A549 (cell line): ENCODE measurements at regions of chr12 and their contacts with region 1.

Region 1: GRCh38 chr12:122336015-122336946 is 70.0 kb upstream of the VPS33A start:
- DNase-seq: peak; percentile 38 to 51
- ATAC-seq: peak in 1 of 2 experiments; percentile 80; a peak in 3 of 6 replicates
- H3K4me3 ChIP-seq: no peak overlapping the region
- H3K27ac ChIP-seq: no peak overlapping the region
- H3K4me1 ChIP-seq: no peaks in the 10 kb centered on the region; the same call in 2 of the 3 replicates
- CTCF ChIP-seq: peak; percentile 86
- EP300 ChIP-seq: no peak
- POLR2A ChIP-seq: no peak
- RAD21 ChIP-seq: peak; percentile 70 to 82

Region 2: DNA sequence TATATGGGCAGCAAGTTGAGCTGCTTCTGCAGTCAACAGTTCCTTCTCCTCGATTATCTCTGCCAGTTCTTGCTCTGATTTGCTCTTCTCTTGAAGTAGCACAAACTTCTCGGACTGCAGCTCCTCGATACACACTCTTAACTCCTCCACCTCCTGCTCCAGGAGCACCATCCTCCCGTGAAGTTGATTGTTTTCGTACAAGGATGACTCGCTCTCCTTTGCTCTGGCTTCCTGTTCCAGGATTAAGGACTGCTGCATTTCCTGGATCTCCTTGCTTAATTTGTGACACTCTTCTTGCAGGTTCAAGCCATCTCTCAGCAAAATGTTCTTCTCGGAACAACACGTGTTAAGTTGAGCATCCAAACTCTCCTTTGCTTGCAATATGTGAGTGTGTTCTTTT is 13.8 kb before region 1 on chr12:
- CTCF ChIA-PET with region 1: interaction called, 21 read pairs
- POLR2A ChIA-PET with region 1: no interaction called
- DNase-seq: no peak
- ATAC-seq: no peak
- H3K4me3 ChIP-seq: no peak overlapping the region
- H3K27ac ChIP-seq: no peak overlapping the region
- H3K4me1 ChIP-seq: peaks cover 11% of the 10 kb centered on the region; the same call in 2 of the 3 replicates
- CTCF ChIP-seq: no peak
- EP300 ChIP-seq: no peak
- POLR2A ChIP-seq: no peak
- RAD21 ChIP-seq: no peak

Region 3: DNA sequence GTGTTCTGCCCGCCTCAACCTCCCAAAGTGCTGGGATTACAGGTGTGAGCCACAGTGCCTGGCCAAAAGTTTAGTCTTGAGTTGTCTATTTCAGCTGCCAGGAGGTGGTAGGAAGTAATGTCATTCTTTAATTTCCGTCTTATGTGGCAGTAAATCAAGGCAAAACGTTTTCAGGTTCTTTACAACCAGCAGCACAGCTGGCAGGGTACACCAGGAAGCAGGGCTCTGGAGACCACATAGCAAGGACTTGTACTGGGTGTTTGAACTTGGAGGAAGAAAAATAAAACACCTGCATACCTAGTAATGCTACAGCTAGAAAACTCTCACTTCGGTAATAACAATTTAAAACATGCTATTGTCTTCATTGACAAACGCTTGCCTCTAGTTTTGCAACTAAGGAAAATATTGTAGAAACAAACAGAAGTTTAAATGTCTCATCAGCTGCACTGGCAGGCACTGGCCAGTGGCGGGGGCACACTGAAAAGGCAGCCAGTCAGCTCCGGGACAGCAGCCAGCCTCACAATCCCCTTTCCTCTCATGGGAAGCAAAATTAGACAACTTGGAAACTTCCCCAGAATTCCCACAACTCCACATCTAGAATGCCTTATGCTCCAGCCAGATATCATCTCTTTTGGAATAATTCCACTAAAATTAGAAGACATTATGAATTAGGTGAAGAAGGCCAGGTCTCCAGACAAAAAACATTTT is 14.0 kb after region 1 on chr12:
- CTCF ChIA-PET with region 1: interaction called, 49 read pairs
- POLR2A ChIA-PET with region 1: no interaction called
- DNase-seq: no peak
- ATAC-seq: peak; percentile 43 to 73; a peak in 3 of 6 replicates
- H3K4me3 ChIP-seq: no peak overlapping the region
- H3K27ac ChIP-seq: no peak overlapping the region
- H3K4me1 ChIP-seq: no peaks in the 10 kb centered on the region
- CTCF ChIP-seq: no peak
- EP300 ChIP-seq: no peak
- POLR2A ChIP-seq: no peak
- RAD21 ChIP-seq: no peak

Region 4: GRCh38 chr12:122738571-122738970 is 402.3 kb after region 1 on chr12:
- CTCF ChIA-PET with region 1: no interaction called
- POLR2A ChIA-PET with region 1: no interaction called
- DNase-seq: no peak
- ATAC-seq: no peak
- H3K4me3 ChIP-seq: no peak overlapping the region
- H3K27ac ChIP-seq: no peak overlapping the region
- H3K4me1 ChIP-seq: no peaks in the 10 kb centered on the region
- CTCF ChIP-seq: no peak
- EP300 ChIP-seq: no peak
- POLR2A ChIP-seq: no peak
- RAD21 ChIP-seq: no peak